ENCODE measurements at regions of chr11 and their contacts with region 1.

Region 1: DNA sequence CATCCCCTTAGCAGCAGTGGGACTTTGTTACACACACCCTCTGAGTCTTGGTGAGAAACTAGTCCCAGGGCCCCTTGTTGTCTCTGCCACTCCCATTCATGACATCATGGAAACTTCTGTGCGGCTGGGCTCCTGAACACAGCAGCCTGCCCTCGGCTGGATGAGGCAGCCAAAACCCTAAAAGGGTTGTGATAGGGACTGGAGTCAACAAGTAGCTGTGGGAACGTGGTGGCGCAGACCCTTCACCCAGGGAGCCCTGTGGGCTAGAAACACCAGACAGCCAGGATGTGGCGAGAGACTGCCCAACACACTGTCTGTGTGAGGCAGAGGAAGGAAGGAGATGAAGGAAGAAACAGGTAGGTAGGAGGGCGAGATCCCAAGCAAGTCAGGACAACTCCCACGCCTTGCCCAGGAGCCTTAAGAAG is 3.9 kb downstream of the CD3D start:
- DNase-seq: peak; percentile 97
- ATAC-seq: peak; percentile 67
- H3K4me3 Mint-ChIP-seq: peak overlapping the region; percentile 84
- H3K27ac Mint-ChIP-seq: peak overlapping the region; percentile 96
- H3K4me1 Mint-ChIP-seq: peaks cover 64% of the 10 kb centered on the region
- H3K27me3 Mint-ChIP-seq: no peaks in the 10 kb centered on the region

Region 2: DNA sequence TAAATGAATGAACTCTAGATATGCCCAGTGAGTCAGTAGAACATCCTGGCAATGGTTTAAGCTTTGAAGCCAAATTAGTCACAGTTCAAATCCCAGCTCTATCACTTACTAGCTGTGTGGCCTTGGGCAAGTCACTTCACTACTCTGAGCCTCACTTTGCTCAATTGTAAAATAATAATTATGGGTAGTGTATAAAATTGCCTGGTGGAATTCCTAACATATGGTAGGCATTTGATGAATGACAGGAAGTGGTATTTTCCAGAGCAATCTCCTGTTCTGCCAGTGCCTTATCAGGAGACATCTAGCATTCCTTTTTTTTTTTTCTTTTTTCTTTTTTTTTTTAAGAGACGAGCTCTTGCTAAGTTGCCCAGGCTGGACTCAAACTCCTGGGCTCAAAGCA is 199.1 kb before region 1 on chr11:
- CTCF ChIA-PET with region 1: no interaction called
- POLR2A ChIA-PET with region 1: no interaction called
- DNase-seq: no peak
- ATAC-seq: no peak
- H3K4me3 Mint-ChIP-seq: no peak overlapping the region
- H3K27ac Mint-ChIP-seq: no peak overlapping the region
- H3K4me1 Mint-ChIP-seq: peaks cover 10% of the 10 kb centered on the region
- H3K27me3 Mint-ChIP-seq: peaks cover 55% of the 10 kb centered on the region

Region 3: GRCh38 chr11:118233382-118233781 is 105.3 kb before region 1 on chr11:
- CTCF ChIA-PET with region 1: no interaction called
- POLR2A ChIA-PET with region 1: no interaction called
- DNase-seq: no peak
- ATAC-seq: no peak
- H3K4me3 Mint-ChIP-seq: no peak overlapping the region
- H3K27ac Mint-ChIP-seq: peak overlapping the region; percentile 17
- H3K4me1 Mint-ChIP-seq: peaks cover 47% of the 10 kb centered on the region
- H3K27me3 Mint-ChIP-seq: no peaks in the 10 kb centered on the region

Region 4: DNA sequence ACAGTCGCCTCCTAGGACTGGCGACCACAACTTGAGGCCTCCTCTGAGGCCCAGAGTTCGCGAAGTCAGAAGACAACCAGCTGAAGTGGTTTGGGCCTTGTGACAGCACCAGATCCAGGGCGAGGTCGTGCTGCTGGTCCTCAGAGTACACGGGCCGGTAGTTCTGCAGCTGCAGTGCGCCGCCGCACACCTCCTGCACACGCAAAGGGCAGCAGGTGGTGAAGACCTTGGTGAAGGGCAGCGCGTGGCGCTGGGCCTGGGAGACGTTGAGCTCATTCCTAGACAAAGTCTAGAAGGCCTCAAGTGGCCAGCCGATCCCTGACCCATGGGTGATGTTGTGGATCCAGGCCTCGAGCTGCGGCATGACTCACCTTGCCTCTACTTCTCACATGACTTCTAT is 15.9 kb before region 1 on chr11:
- CTCF ChIA-PET with region 1: interaction called, 10 read pairs
- POLR2A ChIA-PET with region 1: interaction called, 4 read pairs
- DNase-seq: no peak
- ATAC-seq: no peak
- H3K4me3 Mint-ChIP-seq: no peak overlapping the region
- H3K27ac Mint-ChIP-seq: peak overlapping the region; percentile 37
- H3K4me1 Mint-ChIP-seq: peaks cover 44% of the 10 kb centered on the region
- H3K27me3 Mint-ChIP-seq: no peaks in the 10 kb centered on the region

Region 5: GRCh38 chr11:118353084-118353710 is 14.5 kb after region 1 on chr11:
- CTCF ChIA-PET with region 1: interaction called, 11 read pairs
- POLR2A ChIA-PET with region 1: interaction called, 9 read pairs
- DNase-seq: no peak
- ATAC-seq: peak; percentile 37
- H3K4me3 Mint-ChIP-seq: no peak overlapping the region
- H3K27ac Mint-ChIP-seq: peak overlapping the region; percentile 70
- H3K4me1 Mint-ChIP-seq: peaks cover 39% of the 10 kb centered on the region
- H3K27me3 Mint-ChIP-seq: no peaks in the 10 kb centered on the region

Region 6: GRCh38 chr11:118366287-118366686 is 27.6 kb after region 1 on chr11:
- CTCF ChIA-PET with region 1: no interaction called
- POLR2A ChIA-PET with region 1: no interaction called
- DNase-seq: no peak
- ATAC-seq: no peak
- H3K4me3 Mint-ChIP-seq: no peak overlapping the region
- H3K27ac Mint-ChIP-seq: no peak overlapping the region
- H3K4me1 Mint-ChIP-seq: peaks cover 27% of the 10 kb centered on the region
- H3K27me3 Mint-ChIP-seq: no peaks in the 10 kb centered on the region

Region 7: GRCh38 chr11:118533662-118534363 is 195.2 kb after region 1 on chr11:
- CTCF ChIA-PET with region 1: no interaction called
- POLR2A ChIA-PET with region 1: no interaction called
- DNase-seq: no peak
- ATAC-seq: no peak
- H3K4me3 Mint-ChIP-seq: no peak overlapping the region
- H3K27ac Mint-ChIP-seq: no peak overlapping the region
- H3K4me1 Mint-ChIP-seq: peaks cover 24% of the 10 kb centered on the region
- H3K27me3 Mint-ChIP-seq: no peaks in the 10 kb centered on the region